Mammary epithelial cell (primary cell): ENCODE measurements at regions of chr14 and their contacts with region 1.

Region 1: DNA sequence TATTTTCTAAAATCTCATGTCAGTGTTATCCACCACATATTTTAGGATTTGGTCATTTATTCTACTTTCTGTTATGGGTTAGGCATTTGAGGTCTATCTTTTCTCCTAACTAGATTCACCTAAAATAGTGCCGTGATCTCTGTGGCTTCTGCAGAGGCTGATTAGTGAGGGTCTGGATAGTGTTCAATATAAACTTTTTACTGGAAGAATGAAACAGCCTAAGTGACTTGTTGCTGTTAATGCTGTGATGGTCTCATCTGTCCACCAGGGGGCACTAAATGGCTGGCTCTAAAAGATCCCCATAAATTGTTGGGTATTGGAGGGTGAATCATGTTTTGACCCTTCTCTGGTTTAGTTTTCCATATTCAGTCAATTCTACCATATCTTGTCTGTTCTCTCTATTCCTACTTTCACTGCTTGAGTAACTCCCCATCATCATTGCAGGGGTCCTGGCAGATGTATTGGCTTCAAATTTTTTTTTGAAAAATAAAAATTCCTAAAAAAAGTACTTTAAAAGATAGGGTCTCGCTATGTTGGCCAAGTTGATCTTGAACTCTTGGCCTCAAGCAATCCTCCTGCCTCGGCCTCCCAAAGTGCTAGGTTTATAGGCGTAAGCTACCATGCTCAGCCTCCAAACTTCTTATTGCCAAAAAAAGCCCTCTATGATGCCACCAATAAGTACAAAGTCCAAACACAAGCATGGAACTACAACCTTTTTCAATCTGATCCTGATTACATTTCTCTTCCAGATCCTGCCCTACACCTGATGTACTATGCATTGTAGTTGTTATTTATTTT is 6.9 kb downstream of the PABPN1 start:
- DNase-seq: peak; percentile 57
- H3K4me3 ChIP-seq: no peak overlapping the region
- H3K27ac ChIP-seq: no peak overlapping the region
- H3K4me1 ChIP-seq: peaks cover 6% of the 10 kb centered on the region
- H3K27me3 ChIP-seq: no peaks in the 10 kb centered on the region
- CTCF ChIP-seq: peak; percentile 83 to 91

Region 2: GRCh38 chr14:23366426-23366921 is 38.3 kb after region 1 on chr14:
- CTCF ChIA-PET with region 1: no interaction called
- dilution Hi-C with region 1: loop called (anchors 5 kb)
- in situ Hi-C with region 1: loop called in 1 of 2 experiments (anchors 5 kb)
- intact Hi-C with region 1: loop called (anchors 1 kb)
- DNase-seq: peak; percentile 60
- H3K4me3 ChIP-seq: peak overlapping the region in 2 of 3 experiments; percentile 12 to 34
- H3K27ac ChIP-seq: no peak overlapping the region
- H3K4me1 ChIP-seq: peaks cover 22% of the 10 kb centered on the region
- H3K27me3 ChIP-seq: peaks cover 7% of the 10 kb centered on the region
- CTCF ChIP-seq: no peak

Region 3: DNA sequence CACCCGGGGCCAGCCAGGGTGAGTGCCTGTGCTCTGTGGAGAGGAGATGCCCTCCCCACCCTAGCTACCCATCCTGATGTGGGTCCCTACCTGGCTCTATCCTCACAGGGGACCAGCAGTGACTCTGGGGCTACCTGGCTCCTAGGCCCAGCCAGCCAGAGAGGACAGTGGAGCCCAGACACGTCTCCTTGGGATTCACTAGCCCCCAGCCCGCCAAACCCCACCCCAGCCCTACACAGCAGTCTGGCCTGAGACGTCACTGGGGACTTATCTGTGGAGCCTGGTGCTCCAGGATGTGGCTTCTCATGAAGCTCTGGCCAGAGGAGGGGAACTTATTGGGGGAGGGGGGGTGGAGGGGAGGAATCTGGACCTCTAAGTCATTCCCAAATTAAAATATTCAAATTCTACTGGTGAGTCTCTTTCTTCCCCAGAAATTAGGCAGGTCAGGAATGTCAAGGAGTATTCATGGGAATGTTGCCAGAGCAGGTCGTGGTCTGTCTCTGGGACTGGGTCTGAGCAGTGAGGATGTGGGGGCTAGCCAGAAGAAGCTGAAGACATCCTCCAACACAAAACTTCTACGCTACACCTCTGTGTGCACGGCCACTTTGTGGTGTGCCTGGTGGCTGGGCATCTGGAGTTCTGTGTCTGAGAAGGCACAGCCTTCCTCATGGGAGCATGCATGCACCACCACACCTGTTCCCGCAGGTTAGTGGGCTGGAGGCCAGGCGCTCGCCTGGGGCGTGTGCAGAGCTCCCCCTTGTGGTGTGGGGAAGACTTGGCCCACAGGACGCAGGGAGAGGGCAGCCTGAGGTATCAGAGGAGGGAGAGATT is 51.4 kb after region 1 on chr14:
- CTCF ChIA-PET with region 1: interaction called, 3 read pairs
- dilution Hi-C with region 1: no loop called
- in situ Hi-C with region 1: loop called in 1 of 2 experiments (anchors 5 kb)
- intact Hi-C with region 1: loop called (anchors 1 kb)
- DNase-seq: peak; percentile 55
- H3K4me3 ChIP-seq: no peak overlapping the region
- H3K27ac ChIP-seq: no peak overlapping the region
- H3K4me1 ChIP-seq: no peaks in the 10 kb centered on the region
- H3K27me3 ChIP-seq: no peaks in the 10 kb centered on the region
- CTCF ChIP-seq: peak; percentile 91 to 99

Region 4: GRCh38 chr14:23446291-23446851 is 118.2 kb after region 1 on chr14:
- CTCF ChIA-PET with region 1: no interaction called
- dilution Hi-C with region 1: no loop called
- in situ Hi-C with region 1: no loop called
- intact Hi-C with region 1: loop called (anchors 2 kb)
- DNase-seq: no peak
- H3K4me3 ChIP-seq: no peak overlapping the region
- H3K27ac ChIP-seq: no peak overlapping the region
- H3K4me1 ChIP-seq: no peaks in the 10 kb centered on the region
- H3K27me3 ChIP-seq: no peaks in the 10 kb centered on the region
- CTCF ChIP-seq: no peak

Region 5: DNA sequence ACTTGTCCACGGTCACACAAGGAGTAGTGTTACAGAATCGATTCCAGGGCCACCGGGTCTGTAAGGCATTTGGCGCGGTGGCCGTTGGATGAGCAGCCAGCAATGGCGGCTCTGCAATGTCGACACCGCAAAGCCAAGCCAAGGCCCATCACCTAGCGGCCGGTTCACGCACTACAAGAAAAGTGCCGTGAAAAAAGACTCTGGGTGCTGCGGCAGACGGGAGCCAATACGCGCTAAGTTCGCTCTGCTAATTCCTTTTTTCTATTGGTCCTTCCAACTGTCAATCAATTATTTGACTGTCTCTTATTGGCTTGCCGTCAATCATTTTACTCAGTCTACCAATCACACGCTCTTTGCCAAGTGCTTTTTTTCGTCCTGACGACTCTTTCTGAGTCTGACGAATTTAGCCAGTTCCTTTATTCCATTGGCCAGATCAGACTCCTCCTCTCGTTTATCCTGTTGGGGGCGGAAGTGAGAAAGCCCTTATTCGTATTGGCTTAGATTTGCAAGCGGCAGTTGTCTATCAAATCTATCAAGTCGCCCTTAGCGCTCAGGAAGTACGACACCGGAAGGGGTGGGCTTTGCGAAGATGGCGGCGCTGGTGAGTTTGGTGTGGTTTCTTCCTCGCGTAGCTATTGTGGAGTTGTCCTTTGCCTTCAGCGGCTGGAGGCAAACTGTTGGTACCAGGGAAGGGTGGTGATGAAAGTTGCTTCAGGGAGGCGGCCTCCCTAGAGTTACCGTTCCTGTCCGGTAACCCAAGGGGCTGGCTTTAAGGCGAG is 141.2 kb after region 1 on chr14 and contains the start of gene NGDN:
- CTCF ChIA-PET with region 1: no interaction called
- dilution Hi-C with region 1: no loop called
- in situ Hi-C with region 1: no loop called
- intact Hi-C with region 1: loop called (anchors 2 kb)
- DNase-seq: peak; percentile 100
- H3K4me3 ChIP-seq: peak within 1 kb of the TSS; percentile 65 to 93 (median 90)
- H3K27ac ChIP-seq: peak within 1 kb of the TSS; percentile 87
- H3K4me1 ChIP-seq: peaks cover 10% of the 10 kb centered on the region
- H3K27me3 ChIP-seq: no peaks in the 10 kb centered on the region
- CTCF ChIP-seq: peak; percentile 76 to 85
- total RNA-seq, gene NGDN: 27.0 to 34.5 TPM

Region 6: DNA sequence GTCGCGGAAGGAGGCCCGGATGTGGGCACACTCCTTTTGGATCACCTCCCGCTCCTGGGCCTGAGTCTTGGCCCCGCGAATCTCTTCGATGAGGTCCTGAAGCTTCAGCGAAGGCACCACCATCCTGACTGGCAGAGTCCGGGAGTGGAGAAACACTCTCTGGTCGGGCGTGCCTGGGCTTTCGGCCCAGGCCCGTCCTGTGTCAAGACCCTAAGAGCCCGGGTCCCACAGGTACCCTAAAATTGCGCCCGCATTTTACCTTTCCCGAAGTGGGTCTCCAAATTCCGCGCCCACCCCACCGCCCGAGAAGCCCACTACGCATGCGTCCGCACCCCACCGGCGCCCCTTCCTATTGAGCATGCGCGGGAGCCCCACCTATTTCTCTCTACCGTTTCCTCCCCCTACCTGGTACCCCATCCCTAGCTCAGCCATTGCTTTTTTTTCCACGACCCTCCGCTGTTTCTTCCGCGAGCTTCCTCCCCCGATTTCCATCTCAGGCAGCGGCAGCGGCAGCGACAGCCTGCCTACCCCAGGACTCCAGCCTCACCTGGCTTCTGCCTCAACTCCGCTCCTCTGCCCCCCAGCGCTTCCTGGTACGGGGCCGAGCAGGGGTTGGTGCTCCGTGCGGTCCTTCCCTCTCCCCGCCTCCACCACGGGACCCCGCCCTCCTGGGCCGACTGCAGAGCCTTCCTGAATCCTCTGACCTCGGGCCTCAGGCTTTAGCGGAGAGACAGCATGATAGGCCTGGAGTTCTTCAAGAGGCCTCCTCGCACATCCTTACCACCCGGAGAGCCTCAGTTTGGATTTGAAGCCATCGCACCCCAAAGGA is 239.3 kb after region 1 on chr14 and contains the start of gene AP1G2:
- CTCF ChIA-PET with region 1: no interaction called
- dilution Hi-C with region 1: no loop called
- in situ Hi-C with region 1: loop called in 1 of 2 experiments (anchors 25 kb)
- intact Hi-C with region 1: loop called (anchors 2 kb)
- DNase-seq: peak; percentile 84
- H3K4me3 ChIP-seq: peak within 1 kb of the TSS; percentile 60 to 77 (median 64)
- H3K27ac ChIP-seq: peak within 1 kb of the TSS; percentile 44
- H3K4me1 ChIP-seq: peaks cover 23% of the 10 kb centered on the region
- H3K27me3 ChIP-seq: no peaks in the 10 kb centered on the region
- CTCF ChIP-seq: no peak
- total RNA-seq, gene AP1G2: 54.7 to 132 TPM